ENCODE measurements at regions of chr19 and their contacts with region 1.

Region 1: DNA sequence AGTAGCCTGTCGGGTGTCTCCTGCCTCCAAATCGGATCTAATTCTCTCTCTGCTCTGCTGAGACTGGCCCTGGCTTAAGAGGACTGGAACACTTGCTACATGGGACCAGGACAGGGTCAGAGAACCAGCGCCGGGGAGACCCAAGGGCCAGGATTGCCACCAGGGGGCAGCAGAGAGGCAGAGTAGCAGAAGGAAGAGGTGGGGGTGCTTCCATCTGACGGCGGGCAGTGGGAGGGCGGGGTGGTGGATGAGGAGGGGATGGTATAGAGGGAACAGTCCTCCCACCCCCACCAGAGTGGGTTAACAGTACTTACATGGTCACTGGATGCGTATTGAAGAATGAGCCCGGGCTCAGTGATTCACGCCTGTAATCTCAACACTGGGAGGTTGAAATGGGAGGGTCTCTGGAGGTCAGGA is 11.9 kb downstream of the SELENOW start:
- DNase-seq: peak; percentile 81
- CTCF ChIP-seq: peak; percentile 84

Region 2: DNA sequence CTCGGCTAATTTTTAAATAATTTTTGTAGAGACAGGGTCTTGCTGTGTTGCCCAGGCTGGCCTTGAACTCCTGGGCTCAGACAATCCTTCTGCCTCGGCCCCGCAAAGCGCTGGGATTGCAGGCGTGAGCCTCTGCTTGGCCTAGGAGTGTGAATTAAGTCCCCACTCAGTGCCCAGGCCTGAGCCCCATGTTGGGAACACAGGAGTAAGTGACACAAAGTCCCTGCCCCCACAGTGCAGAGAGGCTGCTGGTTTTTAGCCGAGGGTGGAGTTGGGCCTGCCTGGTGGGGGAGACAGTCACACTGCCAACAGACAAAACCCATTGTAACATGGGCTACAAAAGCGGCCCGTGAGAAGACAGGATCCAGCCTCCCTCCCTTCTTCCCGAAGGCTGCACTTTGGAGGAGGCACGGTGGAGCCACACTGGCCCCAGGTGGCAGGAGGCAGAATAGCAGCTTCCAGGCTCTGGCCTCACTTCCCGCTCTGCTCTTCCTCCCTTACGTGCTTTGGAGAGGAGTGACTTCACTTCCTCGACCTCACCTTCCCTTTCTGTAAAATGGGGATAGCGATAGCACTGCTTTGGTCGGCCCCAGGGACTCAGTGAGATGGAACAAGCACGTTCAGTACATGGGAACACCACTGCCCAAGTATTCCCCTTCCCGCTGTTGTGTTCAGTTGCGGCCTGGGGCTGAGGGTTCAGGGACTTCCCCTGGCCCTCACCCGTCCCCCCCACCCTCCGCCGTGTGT is 92.4 kb before region 1 on chr19:
- CTCF ChIA-PET with region 1: interaction called, 10 read pairs
- POLR2A ChIA-PET with region 1: no interaction called
- DNase-seq: peak; percentile 85
- CTCF ChIP-seq: peak; percentile 95

Region 3: DNA sequence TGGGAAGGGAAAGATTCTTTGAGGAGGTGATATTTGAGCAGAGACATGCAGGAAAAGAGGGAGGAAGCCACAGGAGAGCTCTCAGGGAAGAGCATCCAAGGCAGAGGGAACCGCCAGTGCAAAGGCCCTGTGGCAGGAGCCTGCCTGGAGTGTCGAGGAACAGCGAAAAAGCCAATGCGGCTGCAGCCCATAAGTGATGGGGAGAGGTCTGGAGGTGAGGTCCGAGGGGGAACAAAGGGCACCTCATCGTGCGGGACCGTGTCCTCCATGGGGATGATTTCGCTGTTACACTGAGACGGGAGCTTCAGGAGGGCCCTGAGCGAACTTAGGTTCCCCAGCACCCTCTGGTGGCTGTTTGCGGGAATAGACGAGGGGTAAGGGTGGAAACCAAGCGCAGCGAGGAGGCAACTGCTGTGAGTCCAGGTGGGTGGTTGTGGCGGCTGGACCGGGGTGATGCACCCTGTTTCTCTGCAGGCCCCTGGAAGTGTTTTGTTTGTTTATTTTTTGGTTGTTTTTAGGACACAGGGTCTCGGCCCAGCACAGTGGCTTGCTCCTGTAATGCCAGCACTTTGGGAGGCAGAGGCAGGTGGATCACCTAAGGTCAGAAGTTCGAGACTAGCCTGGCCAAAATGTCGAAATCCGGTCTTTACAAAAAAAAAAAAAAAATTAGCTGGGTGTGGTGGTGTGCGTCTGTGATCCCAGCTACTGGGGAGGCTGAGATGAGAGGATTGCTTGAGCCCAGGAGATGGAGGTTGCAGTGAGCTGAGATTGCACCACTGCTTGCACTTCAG is 83.1 kb before region 1 on chr19:
- CTCF ChIA-PET with region 1: interaction called, 11 read pairs
- POLR2A ChIA-PET with region 1: no interaction called
- DNase-seq: peak; percentile 77
- CTCF ChIP-seq: peak; percentile 66

Region 4: GRCh38 chr19:47756953-47757608 is 33.3 kb before region 1 on chr19:
- CTCF ChIA-PET with region 1: interaction called, 81 read pairs
- POLR2A ChIA-PET with region 1: no interaction called
- DNase-seq: peak; percentile 11
- CTCF ChIP-seq: no peak

Region 5: DNA sequence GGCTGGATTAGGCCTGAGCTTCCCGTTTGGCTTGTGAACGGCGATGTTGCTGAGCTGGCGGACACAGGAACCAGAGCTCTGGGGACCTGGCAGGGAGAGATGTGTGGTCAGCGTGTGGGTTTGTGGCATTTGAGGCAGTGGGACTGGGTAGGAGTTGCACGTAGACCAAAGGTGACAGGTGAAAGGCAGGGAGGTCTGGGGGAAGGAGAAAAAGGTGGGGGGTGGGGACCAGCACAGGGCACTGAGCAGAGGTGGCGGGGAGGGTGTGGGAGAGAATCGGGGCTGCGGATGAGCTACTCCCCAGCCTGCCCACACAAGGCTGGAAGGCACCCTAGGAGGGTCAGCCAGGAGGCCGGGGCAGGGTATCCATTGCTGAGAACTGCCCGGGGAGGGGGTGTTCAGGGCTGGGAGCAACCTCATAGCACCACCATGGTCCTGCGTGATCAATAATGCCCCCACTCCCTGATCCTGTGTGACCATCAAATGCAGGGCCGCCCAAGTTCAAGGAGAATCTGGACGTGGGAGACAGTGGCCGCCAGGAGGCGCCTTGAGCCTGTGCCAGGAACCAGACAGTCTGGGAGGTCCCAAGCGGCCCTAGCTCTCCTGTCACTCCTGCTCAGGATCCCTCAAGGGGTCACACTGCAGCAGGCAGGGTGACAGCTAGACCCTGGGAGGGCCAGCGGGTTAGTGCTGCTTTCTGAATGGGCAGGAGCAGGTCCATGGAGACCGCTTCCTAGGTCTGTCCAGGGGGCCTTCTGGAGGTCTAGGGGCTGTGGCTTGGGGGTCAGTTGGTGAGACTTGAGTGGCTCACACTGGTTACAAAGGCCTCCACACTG is 24.7 kb before region 1 on chr19:
- CTCF ChIA-PET with region 1: interaction called, 81 read pairs
- POLR2A ChIA-PET with region 1: no interaction called
- DNase-seq: peak; percentile 73
- CTCF ChIP-seq: peak; percentile 68